ENCODE measurements at regions of chr2 and their contacts with region 1.

Region 1: GRCh38 chr2:224449212-224450147 is 47.6 kb upstream of the FAM124B start:
- DNase-seq: no peak

Region 2: GRCh38 chr2:224369028-224369632 is 80.3 kb before region 1 on chr2:
- intact Hi-C with region 1: loop called (anchors 5 kb)
- DNase-seq: no peak

Region 3: GRCh38 chr2:224545884-224546644 is 96.6 kb after region 1 on chr2:
- intact Hi-C with region 1: no loop called
- DNase-seq: no peak

Region 4: GRCh38 chr2:224650815-224651439 is 201.4 kb after region 1 on chr2:
- intact Hi-C with region 1: loop called (anchors 10 kb)
- DNase-seq: no peak